OCI-LY7 (cell line): ENCODE measurements at regions of chr5 and their contacts with region 1.

Region 1: DNA sequence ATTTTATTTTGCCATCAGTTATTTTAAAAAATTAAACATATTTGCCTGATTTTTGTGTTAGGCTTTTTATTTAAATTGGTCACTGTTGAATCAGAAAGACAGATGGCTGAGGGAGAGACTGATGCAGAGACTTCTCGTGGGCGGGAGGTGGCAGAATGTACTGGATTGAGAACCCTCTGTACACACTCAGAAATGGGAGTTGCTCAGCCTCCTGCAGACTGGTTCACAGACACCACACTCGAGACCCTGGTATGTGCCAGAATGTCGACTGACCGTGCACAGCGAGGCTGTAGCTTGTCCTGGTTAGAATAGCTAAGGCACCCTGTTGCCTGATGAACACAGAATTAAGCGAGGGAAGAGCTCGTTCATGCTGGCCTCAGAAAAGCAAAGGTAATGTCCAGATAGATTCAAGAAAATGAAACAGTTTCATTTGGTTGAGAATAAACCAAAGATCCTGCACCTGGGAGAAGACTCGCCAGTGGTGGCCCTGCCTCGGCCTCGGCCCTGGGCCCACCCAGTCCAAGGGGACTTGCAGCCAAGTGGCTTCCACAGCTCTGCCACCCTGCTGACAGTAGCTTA is 71.3 kb upstream of the OTULINL start:
- DNase-seq: peak; percentile 13
- H3K4me3 ChIP-seq: no peak overlapping the region
- H3K27ac ChIP-seq: no peak overlapping the region
- H3K4me1 ChIP-seq: no peaks in the 10 kb centered on the region
- CTCF ChIP-seq: peak; percentile 49

Region 2: DNA sequence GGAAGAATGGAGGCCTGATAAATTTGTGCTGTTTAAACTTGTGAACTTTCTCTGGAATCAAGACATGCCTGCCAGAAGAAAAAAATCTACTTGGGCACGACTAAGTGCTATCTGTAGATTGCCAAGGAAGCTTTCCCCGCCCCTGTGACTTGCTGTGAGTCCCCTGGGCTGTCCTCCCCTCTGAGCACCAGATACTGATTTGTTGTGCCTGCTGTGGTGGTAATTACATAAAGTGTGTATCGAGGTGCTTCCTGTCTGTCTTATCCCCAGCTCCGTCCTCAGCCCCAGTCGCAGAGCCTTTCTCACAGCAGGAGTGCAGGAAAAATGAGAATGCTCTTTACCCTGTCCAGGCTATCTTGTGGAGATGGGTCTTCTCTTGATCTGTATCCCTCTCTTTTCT is 313.2 kb before region 1 on chr5:
- CTCF ChIA-PET with region 1: no interaction called
- POLR2A ChIA-PET with region 1: interaction called, 12 read pairs
- intact Hi-C with region 1: no loop called
- DNase-seq: no peak
- H3K4me3 ChIP-seq: no peak overlapping the region
- H3K27ac ChIP-seq: no peak overlapping the region
- H3K4me1 ChIP-seq: no peaks in the 10 kb centered on the region
- CTCF ChIP-seq: no peak

Region 3: DNA sequence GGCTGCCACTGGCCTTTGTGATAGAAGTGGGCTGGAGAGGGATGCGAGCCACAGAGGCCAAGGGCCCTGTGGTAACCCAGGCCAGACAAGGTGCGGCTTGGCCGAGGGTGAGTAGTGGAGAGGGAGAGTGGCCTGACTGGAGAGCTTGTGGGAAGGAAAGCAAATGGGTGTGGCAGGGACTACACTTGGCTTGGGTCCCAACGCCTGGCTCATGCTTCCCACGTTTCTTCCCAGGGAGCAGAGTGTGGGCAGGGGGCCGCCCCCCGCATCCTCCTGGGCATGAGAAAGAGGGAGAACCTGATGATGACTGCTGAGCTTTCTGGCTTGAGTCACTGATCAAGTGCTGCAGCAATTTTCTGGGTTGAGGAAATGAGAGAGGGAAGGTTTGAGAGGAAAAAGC is 265.6 kb after region 1 on chr5:
- CTCF ChIA-PET with region 1: no interaction called
- POLR2A ChIA-PET with region 1: no interaction called
- intact Hi-C with region 1: no loop called
- DNase-seq: no peak
- H3K4me3 ChIP-seq: no peak overlapping the region
- H3K27ac ChIP-seq: no peak overlapping the region
- H3K4me1 ChIP-seq: no peaks in the 10 kb centered on the region
- CTCF ChIP-seq: no peak